GM12878 (cell line): ENCODE measurements at regions of chr2 and their contacts with region 1.

Region 1: DNA sequence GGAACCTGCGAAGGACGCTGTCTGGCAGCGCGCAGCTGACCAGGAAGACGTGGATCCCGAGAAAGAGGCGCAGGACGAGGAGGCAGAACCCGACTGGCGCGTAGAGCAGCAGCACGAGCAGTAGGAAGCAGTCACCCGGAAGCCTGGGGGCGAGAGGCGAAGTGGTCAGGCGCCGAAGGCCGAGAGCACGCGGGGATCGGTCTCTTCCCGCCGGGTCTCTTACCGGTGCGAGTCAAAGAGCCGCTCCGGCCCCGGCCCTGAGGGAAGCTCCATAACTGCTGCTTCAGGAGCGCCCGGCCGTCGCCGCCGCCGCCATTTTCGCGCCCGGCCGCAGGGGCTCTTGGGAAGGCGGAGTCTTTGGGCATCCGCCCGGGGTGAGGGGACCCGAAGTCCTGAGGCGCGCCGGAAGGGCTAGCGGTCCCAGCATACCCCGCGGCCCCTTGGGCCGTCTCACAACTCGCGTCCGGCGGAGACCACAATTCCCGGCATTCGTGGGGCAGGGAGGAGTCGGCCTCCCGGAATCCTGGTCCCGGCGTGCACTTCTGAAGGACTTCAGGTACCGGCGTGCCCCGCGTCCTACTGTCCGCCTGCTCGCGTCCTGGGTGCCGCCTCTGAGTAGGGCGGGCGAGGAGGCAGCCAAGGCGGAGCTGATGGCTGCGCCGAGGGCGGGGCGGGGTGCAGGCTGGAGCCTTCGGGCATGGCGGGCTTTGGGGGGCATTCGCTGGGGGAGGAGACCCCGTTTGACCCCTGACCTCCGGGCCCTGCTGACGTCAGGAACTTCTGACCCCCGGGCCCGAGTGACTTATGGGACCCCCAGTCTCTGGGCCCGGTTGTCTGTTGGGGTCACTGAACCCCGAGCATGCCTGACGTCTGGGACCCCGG is at the starts of genes AUP1 and HTRA2:
- DNase-seq: peak; percentile 96
- ATAC-seq: peak; percentile 90
- H3K4me3 ChIP-seq: peak within 1 kb of the TSS; percentile 94
- H3K27ac ChIP-seq: peak within 1 kb of the TSS; percentile 96
- H3K4me1 ChIP-seq: peaks cover 33% of the 10 kb centered on the region
- H3K27me3 ChIP-seq: no peaks in the 10 kb centered on the region
- CTCF ChIP-seq: no peak
- EP300 ChIP-seq: no peak
- POLR2A ChIP-seq: peak; percentile 84
- RAD21 ChIP-seq: no peak
- polyA plus RNA-seq, gene AUP1: 39.1 to 56.5 TPM
- polyA plus RNA-seq, gene HTRA2: 42.3 to 46.4 TPM

Region 2: GRCh38 chr2:74482801-74483674 is 46.6 kb before region 1 on chr2 and contains the starts of genes CCDC142 and TTC31:
- CTCF ChIA-PET with region 1: interaction called, 56 read pairs
- POLR2A ChIA-PET with region 1: interaction called, 38 read pairs
- RAD21 ChIA-PET with region 1: interaction called, 64 read pairs
- SMC1A ChIA-PET with region 1: interaction called, 12 read pairs
- in situ Hi-C with region 1: no loop called
- intact Hi-C with region 1: loop called (anchors 1 kb)
- DNase-seq: peak; percentile 89
- ATAC-seq: peak; percentile 95
- H3K4me3 ChIP-seq: peak within 1 kb of the TSS; percentile 97
- H3K27ac ChIP-seq: peak within 1 kb of the TSS; percentile 96
- H3K4me1 ChIP-seq: peaks cover 13% of the 10 kb centered on the region
- H3K27me3 ChIP-seq: no peaks in the 10 kb centered on the region; a peak in 1 of 4 replicates
- CTCF ChIP-seq: peak; percentile 93 to 97 (median 97)
- EP300 ChIP-seq: no peak
- POLR2A ChIP-seq: peak; percentile 83
- RAD21 ChIP-seq: peak; percentile 78
- polyA plus RNA-seq, gene CCDC142: 0.93 to 1.5 TPM
- polyA plus RNA-seq, gene TTC31: 6.5 to 7.2 TPM

Region 3: GRCh38 chr2:74507145-74507925 is 22.3 kb before region 1 on chr2 and contains the start of gene PCGF1:
- CTCF ChIA-PET with region 1: interaction called, 135 read pairs
- POLR2A ChIA-PET with region 1: interaction called, 33 read pairs
- RAD21 ChIA-PET with region 1: interaction called, 49 read pairs
- SMC1A ChIA-PET with region 1: interaction called, 52 read pairs
- in situ Hi-C with region 1: no loop called
- intact Hi-C with region 1: loop called (anchors 1 kb)
- DNase-seq: peak; percentile 95
- ATAC-seq: peak; percentile 89
- H3K4me3 ChIP-seq: peak within 1 kb of the TSS; percentile 98
- H3K27ac ChIP-seq: peak within 1 kb of the TSS; percentile 97
- H3K4me1 ChIP-seq: peaks cover 27% of the 10 kb centered on the region
- H3K27me3 ChIP-seq: peaks cover 0 to under 1% of the 10 kb centered on the region in 2 experiments; a peak in 1 of 4 replicates
- CTCF ChIP-seq: peak; percentile 64 to 75 (median 71)
- EP300 ChIP-seq: no peak; a peak in 1 of 4 replicates
- POLR2A ChIP-seq: peak; percentile 94
- RAD21 ChIP-seq: peak; percentile 49
- polyA plus RNA-seq, gene PCGF1: 42.5 to 50.8 TPM

Region 4: DNA sequence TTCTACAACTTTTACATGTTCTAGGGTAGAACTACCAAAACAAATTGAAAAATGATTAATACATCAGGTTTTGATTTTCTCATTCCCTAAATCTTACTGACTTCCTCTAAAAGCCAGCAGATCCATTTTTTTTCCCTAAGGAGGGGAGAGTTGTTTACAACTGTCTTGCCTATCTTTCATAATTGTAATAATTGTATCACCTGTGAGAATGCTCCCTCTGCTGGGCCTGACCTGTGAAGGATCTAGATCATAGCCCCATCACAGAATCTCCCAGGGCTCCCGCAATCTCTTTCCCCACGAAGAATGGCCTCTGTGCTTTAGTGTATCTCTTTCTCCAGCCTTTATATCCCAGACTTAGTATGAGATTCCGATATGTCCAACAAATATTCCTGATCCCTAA is 15.0 kb after region 1 on chr2:
- CTCF ChIA-PET with region 1: interaction called, 96 read pairs
- POLR2A ChIA-PET with region 1: interaction called, 27 read pairs
- RAD21 ChIA-PET with region 1: interaction called, 24 read pairs
- SMC1A ChIA-PET with region 1: interaction called, 45 read pairs
- in situ Hi-C with region 1: no loop called
- intact Hi-C with region 1: no loop called
- DNase-seq: no peak
- ATAC-seq: no peak
- H3K4me3 ChIP-seq: no peak overlapping the region
- H3K27ac ChIP-seq: no peak overlapping the region
- H3K4me1 ChIP-seq: peaks cover 12% of the 10 kb centered on the region
- H3K27me3 ChIP-seq: no peaks in the 10 kb centered on the region
- CTCF ChIP-seq: peak; percentile 33 to 41 (median 39); a peak in 4 of 6 replicates
- EP300 ChIP-seq: no peak
- POLR2A ChIP-seq: no peak
- RAD21 ChIP-seq: peak; percentile 46; the same call in 1 of the 2 replicates

Region 5: DNA sequence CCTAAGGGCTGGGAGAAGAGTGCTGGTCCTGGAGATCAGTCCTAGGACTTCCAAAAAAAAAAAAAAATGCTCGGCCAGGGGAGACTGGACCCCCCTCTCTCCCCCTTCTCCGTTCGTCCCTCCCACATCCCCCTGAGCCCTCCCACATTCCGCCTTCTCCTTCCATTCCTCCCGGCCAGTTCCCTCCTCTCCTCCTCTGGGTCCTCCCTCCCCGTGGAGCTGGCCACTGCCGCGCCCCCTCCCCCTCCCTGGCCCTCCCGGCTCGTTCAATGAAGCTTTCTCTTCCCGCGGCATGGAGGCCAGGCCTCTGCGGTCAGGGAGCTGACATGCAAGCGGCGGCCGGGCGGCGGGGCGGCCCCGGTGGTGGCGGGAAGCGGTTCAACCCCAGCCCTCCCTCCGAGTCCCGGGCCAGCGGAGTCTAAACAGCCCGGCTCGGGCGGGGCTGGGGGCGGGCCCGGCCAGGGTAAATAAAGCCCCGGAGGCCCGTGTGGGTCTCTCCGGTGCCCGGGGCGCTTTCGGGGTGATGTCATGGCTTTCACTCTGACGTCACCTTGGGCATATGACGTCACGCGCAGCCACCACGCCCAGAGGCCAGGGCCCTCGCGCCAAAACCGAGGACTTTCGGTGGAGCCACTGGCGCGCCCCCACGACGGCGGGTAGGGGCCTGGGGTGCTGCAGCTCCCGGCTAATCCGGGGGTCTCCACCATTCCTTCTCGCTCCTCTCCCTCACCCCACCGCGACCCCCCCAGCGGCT is 24.5 kb after region 1 on chr2 and contains the start of gene LOXL3:
- CTCF ChIA-PET with region 1: interaction called, 96 read pairs
- POLR2A ChIA-PET with region 1: interaction called, 27 read pairs
- RAD21 ChIA-PET with region 1: interaction called, 24 read pairs
- SMC1A ChIA-PET with region 1: interaction called, 30 read pairs
- in situ Hi-C with region 1: no loop called
- intact Hi-C with region 1: loop called (anchors 1 kb)
- DNase-seq: no peak
- ATAC-seq: peak; percentile 20
- H3K4me3 ChIP-seq: peak within 1 kb of the TSS; percentile 95
- H3K27ac ChIP-seq: peak within 1 kb of the TSS; percentile 93
- H3K4me1 ChIP-seq: peaks cover 29% of the 10 kb centered on the region
- H3K27me3 ChIP-seq: no peaks in the 10 kb centered on the region
- CTCF ChIP-seq: no peak; a peak in 1 of 6 replicates
- EP300 ChIP-seq: peak in 1 of 2 experiments; percentile 28; a peak in 1 of 4 replicates
- POLR2A ChIP-seq: peak; percentile 62; the same call in 1 of the 2 replicates
- RAD21 ChIP-seq: 0 out of 2 replicates have a peak, but pooled peaks have one; percentile 4
- polyA plus RNA-seq, gene LOXL3: 6.2 to 6.7 TPM

Region 6: DNA sequence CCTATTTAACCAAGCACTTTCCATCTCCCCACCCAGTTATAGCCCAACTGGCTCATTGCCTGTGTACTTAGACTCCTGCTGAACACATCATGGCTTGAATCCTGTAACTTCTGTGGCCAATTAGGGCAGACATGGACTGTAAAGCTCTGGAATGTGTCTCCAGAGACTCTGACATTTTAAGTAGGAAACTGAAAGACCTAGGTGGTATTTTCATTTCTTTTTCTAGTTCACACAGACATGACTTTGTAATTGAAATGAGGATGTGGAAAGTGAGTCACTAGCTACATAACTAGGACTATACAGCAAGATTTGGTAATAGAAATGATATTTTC is 37.1 kb after region 1 on chr2:
- CTCF ChIA-PET with region 1: interaction called, 8 read pairs
- POLR2A ChIA-PET with region 1: interaction called, 14 read pairs
- RAD21 ChIA-PET with region 1: interaction called, 21 read pairs
- SMC1A ChIA-PET with region 1: interaction called, 21 read pairs
- in situ Hi-C with region 1: no loop called
- intact Hi-C with region 1: no loop called
- DNase-seq: no peak
- ATAC-seq: peak; percentile 59
- H3K4me3 ChIP-seq: no peak overlapping the region; the same call in 1 of the 2 replicates
- H3K27ac ChIP-seq: peak overlapping the region; percentile 77
- H3K4me1 ChIP-seq: peaks cover 57% of the 10 kb centered on the region
- H3K27me3 ChIP-seq: no peaks in the 10 kb centered on the region
- CTCF ChIP-seq: no peak
- EP300 ChIP-seq: peak; percentile 38 to 63; a peak in 3 of 4 replicates
- POLR2A ChIP-seq: no peak
- RAD21 ChIP-seq: no peak

Region 7: GRCh38 chr2:74573747-74574562 is 44.4 kb after region 1 on chr2:
- CTCF ChIA-PET with region 1: interaction called, 11 read pairs
- POLR2A ChIA-PET with region 1: interaction called, 12 read pairs
- RAD21 ChIA-PET with region 1: interaction called, 21 read pairs
- SMC1A ChIA-PET with region 1: interaction called, 43 read pairs
- in situ Hi-C with region 1: no loop called
- intact Hi-C with region 1: no loop called
- DNase-seq: peak; percentile 59
- ATAC-seq: peak; percentile 54
- H3K4me3 ChIP-seq: peak overlapping the region; percentile 13; the same call in 1 of the 2 replicates
- H3K27ac ChIP-seq: peak overlapping the region; percentile 43
- H3K4me1 ChIP-seq: peaks cover 77% of the 10 kb centered on the region
- H3K27me3 ChIP-seq: no peaks in the 10 kb centered on the region
- CTCF ChIP-seq: no peak
- EP300 ChIP-seq: no peak; a peak in 1 of 4 replicates
- POLR2A ChIP-seq: no peak
- RAD21 ChIP-seq: no peak

Region 8: DNA sequence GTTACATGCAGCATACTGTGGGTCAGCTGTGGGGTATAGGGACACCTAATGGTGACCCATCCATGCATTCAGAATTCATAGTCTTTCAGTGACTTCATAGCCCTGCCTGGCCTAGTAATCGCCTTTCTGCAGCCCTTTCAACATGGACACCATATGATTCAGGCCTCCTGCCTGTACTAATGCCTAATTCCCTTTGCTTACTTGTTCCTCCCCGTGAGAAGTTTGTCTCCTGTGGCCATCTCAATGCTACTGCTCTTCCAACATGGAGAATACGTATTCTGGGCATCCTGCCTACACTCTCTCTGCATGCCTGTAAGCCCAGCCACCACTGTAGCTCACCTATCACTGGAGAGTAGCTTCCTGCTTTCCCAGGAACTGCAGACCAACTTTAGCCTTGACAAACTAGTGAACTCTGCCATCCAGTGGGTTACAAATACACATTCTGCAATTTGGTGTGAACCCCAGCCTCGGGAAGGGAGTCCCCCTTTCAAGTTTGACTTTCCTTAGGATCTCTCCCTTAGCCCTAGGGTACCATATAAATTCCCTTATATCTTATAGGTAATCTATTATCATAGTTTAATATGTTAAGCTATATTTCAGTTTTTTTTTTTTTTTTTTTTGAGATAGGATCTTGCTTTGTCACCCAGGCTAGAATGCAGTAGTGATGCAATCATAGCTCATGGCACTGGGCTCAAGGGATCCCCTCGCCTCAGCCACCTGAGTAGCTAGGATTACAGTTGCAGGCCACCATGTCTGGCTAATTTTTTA is 96.2 kb after region 1 on chr2:
- CTCF ChIA-PET with region 1: no interaction called
- POLR2A ChIA-PET with region 1: no interaction called
- RAD21 ChIA-PET with region 1: no interaction called
- SMC1A ChIA-PET with region 1: no interaction called
- in situ Hi-C with region 1: no loop called
- intact Hi-C with region 1: no loop called
- DNase-seq: no peak
- ATAC-seq: peak; percentile 32; the same call in 1 of the 3 replicates
- H3K4me3 ChIP-seq: no peak overlapping the region
- H3K27ac ChIP-seq: no peak overlapping the region
- H3K4me1 ChIP-seq: no peaks in the 10 kb centered on the region
- H3K27me3 ChIP-seq: no peaks in the 10 kb centered on the region
- CTCF ChIP-seq: no peak
- EP300 ChIP-seq: no peak
- POLR2A ChIP-seq: no peak
- RAD21 ChIP-seq: no peak